ENCODE measurements at regions of chr9 and their contacts with region 1.

Region 1: GRCh38 chr9:108333530-108333983 is 522.2 kb downstream of the ACTL7B start:
- DNase-seq: no peak
- ATAC-seq: no peak

Region 2: DNA sequence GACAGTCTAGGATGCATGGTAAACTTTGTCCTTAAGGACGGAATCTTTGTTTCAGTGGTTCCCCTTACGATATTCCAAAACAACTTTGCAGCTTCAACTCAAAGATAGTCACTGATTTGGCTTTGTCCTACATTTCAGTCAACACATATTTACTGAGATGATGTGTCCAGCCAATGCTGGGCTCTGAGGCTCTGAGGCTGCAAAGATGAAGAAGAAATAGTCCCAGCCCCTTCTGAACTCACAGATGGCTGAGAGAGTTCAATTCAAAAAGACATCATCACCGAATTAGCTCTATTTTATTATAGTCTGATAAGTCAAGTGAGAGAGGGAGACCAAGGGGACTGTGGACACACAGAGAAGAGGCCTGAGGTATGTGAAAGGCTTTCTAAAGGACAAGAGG is 21.8 kb before region 1 on chr9:
- intact Hi-C with region 1: loop called in 1 of 2 experiments (anchors 2 kb)
- DNase-seq: no peak
- ATAC-seq: no peak